ENCODE measurements at regions of chr19 and their contacts with region 1.

Region 1: GRCh38 chr19:10864538-10864899 is 6.8 kb upstream of the CARM1 start:
- DNase-seq: no peak
- H3K4me3 ChIP-seq: no peak overlapping the region
- CTCF ChIP-seq: peak; percentile 91

Region 2: GRCh38 chr19:10701955-10702525 is 162.5 kb before region 1 on chr19:
- CTCF ChIA-PET with region 1: interaction called, 15 read pairs
- POLR2A ChIA-PET with region 1: no interaction called
- DNase-seq: no peak
- H3K4me3 ChIP-seq: peak overlapping the region; percentile 98
- CTCF ChIP-seq: no peak

Region 3: DNA sequence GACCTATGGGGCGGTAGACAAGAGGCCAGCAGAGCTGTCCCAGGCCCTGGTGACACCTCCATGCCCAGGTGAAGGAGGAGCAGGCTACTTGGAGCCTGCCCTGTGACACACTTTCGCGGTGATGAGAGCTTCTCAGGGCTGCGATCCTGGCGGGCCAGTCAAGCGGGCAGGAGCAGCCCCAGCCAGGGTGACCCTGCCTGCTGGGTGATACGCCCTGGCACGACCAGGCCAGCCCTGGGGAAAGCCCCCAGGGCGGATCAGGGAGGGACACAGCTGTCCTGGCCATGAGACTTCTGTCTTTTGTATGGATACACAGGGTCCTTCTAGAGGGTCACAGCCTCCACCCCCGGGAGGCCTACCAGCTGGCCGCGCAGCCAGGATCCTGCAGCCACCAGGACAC is 133.6 kb before region 1 on chr19:
- CTCF ChIA-PET with region 1: interaction called, 11 read pairs
- POLR2A ChIA-PET with region 1: no interaction called
- DNase-seq: no peak
- H3K4me3 ChIP-seq: no peak overlapping the region
- CTCF ChIP-seq: no peak

Region 4: DNA sequence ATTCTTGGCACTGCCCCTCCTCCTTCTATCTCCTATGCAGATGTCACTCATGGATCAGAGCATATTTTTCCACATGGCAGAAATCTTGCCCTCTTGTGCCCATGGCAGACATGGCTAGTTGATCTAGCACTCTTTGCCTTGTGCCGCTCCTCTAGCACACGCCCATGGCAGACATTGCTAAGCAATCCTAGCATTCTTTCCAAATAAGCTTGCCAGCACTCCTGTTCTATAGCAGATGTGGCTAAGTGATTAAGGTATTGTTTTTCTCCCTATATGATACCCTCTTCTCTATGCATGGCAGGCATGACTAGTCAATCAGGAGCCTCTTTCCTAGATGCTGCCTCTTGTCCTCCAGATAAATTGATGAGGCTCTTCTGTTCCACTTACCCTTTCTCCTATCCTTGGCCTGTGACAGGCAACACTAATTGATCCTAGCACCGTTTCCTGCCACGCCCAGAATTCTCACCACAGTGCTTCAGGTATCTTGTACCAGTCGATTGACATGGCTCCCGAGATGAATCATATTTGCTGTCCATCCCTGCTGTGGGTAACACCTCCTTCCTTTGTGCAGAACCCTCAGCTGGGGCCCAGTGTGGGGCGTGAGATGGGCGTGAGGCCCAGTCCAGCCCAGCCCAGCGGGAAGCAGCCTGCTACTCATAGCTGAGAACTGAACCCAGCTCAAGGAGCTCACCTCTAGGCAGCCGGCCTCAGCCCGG is 55.4 kb before region 1 on chr19:
- CTCF ChIA-PET with region 1: interaction called, 19 read pairs
- POLR2A ChIA-PET with region 1: no interaction called
- DNase-seq: no peak
- H3K4me3 ChIP-seq: no peak overlapping the region
- CTCF ChIP-seq: no peak

Region 5: DNA sequence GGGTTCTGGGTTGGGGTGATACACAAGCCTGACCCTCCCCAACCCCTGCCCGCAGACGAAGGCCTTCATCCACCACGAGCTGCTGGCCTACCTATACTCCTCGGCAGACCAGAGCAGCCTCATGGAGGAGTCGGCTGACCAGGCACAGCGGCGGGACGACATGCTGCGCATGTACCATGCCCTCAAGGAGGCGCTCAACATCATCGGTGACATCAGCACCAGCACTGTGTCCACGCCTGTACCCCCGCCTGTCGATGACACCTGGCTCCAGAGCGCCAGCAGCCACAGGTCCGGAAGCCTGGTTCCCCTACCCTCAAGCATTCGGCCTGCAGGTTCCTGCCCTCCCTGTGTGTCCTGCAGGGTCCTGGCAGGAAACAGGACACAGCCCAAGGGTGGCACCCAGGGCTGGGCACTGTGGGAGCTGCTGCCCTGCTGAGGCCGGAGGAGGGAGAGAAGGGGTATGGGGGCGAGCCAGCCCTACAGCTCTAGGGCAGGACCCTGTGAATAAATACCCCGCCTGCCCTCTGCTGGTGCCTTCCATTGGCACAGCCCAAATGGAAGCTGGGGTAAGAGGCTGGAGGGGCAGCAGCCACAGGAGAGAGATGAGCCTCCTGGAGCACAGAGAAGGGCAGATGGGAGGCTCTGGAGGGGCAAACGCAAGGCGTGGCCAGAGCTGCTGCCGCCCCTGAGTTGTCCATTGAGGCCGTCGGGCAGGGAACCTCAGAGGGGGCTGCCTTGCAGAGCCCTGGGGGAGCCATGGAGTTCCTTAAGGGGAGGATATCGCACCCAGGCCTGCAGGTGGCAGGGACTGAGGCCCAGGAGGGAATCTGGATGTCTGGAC is 35.3 kb before region 1 on chr19:
- CTCF ChIA-PET with region 1: interaction called, 16 read pairs
- POLR2A ChIA-PET with region 1: no interaction called
- DNase-seq: no peak
- H3K4me3 ChIP-seq: no peak overlapping the region
- CTCF ChIP-seq: no peak

Region 6: GRCh38 chr19:10891405-10892086 is 27.0 kb after region 1 on chr19:
- CTCF ChIA-PET with region 1: interaction called, 10 read pairs
- POLR2A ChIA-PET with region 1: no interaction called
- DNase-seq: no peak
- H3K4me3 ChIP-seq: no peak overlapping the region
- CTCF ChIP-seq: no peak